ENCODE measurements at regions of chr18 and their contacts with region 1.

Region 1: DNA sequence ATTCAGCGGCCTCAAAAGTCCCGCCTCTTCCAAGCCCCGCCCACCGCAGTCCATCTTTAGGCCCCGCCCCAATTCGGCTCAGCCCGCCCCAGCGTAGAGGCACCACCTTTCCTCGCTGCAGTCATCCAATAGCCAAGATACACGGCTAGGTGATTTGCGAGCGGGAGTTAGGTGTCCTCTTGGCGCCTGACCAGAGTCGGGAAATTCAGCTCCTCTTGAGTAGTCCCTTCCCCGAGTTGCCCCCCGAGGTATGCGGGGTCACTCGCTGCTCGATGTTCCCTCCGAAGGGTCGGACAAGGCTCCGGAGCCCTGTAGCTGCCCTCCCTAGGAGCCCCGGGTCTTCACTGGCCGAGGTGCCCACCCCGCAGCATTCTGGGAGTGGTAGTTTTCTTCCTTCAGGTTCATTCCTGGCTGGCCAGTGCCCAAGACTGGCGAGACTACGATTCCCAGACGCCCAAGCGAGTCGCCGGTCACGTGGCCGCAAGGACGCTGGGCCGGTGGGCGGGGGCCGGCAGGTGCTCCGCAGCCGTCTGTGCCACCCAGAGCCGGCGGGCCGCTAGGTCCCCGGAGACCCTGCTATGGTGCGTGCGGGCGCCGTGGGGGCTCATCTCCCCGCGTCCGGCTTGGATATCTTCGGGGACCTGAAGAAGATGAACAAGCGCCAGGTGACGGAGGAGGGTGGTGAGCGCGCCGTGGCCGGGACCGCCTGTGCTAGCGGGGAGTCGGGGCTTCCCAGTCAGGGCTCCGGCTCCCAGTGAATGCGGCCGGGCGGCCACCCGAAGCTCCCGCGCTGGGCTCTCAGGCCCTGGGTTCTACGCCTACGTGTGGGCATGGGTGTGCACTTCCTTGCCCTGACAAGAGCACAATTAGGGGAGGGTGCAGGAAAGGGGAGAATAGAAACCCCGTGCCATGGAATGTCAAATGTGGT is at the start of gene SEC11C:
- DNase-seq: peak; percentile 93
- ATAC-seq: peak; percentile 85
- H3K4me3 ChIP-seq: peak within 1 kb of the TSS; percentile 93
- H3K27ac ChIP-seq: peak within 1 kb of the TSS; percentile 98
- H3K4me1 ChIP-seq: peaks cover 8% of the 10 kb centered on the region; the same call in 1 of the 2 replicates
- H3K27me3 ChIP-seq: 0 out of 4 replicates have a peak, but pooled peaks cover 0 to 4% of the 10 kb centered on the region in 2 experiments
- CTCF ChIP-seq: no peak
- EP300 ChIP-seq: no peak
- POLR2A ChIP-seq: peak; percentile 93
- RAD21 ChIP-seq: no peak
- polyA plus RNA-seq, gene SEC11C: 213 to 304 TPM

Region 2: DNA sequence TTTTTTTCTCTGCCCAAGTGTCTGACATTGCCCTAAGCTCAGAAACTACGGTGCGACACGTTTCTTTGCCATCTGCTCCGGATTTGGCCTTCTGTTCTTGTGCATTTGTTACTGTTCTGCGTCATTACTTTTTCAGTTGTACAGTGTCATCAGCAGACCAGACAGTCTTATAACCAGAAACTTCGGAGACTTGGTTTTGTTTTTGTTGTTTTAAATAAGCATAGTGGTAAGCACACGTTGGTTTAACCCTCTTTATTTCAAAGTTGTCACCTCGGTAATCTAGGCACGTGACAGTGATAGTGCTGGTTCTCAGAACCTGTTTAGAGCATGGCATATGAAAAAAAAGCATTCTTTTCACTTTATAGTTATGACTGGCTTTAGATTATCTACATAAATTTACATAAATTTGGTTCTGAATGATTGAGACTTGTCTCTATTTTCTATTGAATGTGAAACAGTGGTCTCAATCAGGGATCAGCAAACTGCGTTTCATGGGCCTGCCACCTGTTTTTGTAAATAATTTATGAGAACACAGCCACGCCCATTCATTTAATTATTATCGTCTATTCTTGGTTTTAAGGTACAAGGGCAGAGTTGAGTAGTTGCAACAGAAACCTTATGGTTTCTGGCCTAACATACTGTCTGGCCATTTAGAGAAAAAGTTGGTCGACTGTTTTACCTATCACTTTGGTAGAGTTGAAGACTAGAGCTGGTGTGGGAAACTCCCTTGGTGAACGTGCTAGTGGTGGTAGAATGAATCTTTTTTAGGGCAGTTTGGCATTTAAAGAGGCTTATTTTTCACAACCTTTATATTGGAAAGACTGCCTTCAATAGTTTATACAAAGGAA is 168.5 kb before region 1 on chr18:
- CTCF ChIA-PET with region 1: no interaction called
- POLR2A ChIA-PET with region 1: no interaction called
- RAD21 ChIA-PET with region 1: interaction called, 8 read pairs
- SMC1A ChIA-PET with region 1: interaction called, 4 read pairs
- in situ Hi-C with region 1: no loop called
- intact Hi-C with region 1: loop called (anchors 5 kb)
- DNase-seq: peak; percentile 76
- ATAC-seq: peak; percentile 88
- H3K4me3 ChIP-seq: no peak overlapping the region; the same call in 1 of the 2 replicates
- H3K27ac ChIP-seq: peak overlapping the region; percentile 67
- H3K4me1 ChIP-seq: peaks cover 44% of the 10 kb centered on the region
- H3K27me3 ChIP-seq: no peaks in the 10 kb centered on the region
- CTCF ChIP-seq: no peak
- EP300 ChIP-seq: no peak; a peak in 2 of 4 replicates
- POLR2A ChIP-seq: no peak
- RAD21 ChIP-seq: no peak

Region 3: GRCh38 chr18:59085797-59086196 is 53.8 kb before region 1 on chr18:
- CTCF ChIA-PET with region 1: interaction called, 22 read pairs
- POLR2A ChIA-PET with region 1: no interaction called
- RAD21 ChIA-PET with region 1: interaction called, 9 read pairs
- SMC1A ChIA-PET with region 1: interaction called, 8 read pairs
- in situ Hi-C with region 1: no loop called
- intact Hi-C with region 1: no loop called
- DNase-seq: no peak
- ATAC-seq: no peak
- H3K4me3 ChIP-seq: no peak overlapping the region
- H3K27ac ChIP-seq: no peak overlapping the region
- H3K4me1 ChIP-seq: peaks cover 4% of the 10 kb centered on the region
- H3K27me3 ChIP-seq: peaks cover 0 to 3% of the 10 kb centered on the region in 2 experiments; a peak in 1 of 4 replicates
- CTCF ChIP-seq: no peak
- EP300 ChIP-seq: no peak
- POLR2A ChIP-seq: no peak
- RAD21 ChIP-seq: no peak

Region 4: GRCh38 chr18:59358712-59359575 is 219.3 kb after region 1 on chr18 and contains the start of gene LMAN1:
- CTCF ChIA-PET with region 1: interaction called, 3 read pairs
- POLR2A ChIA-PET with region 1: interaction called, 4 read pairs
- RAD21 ChIA-PET with region 1: interaction called, 4 read pairs
- SMC1A ChIA-PET with region 1: interaction called, 4 read pairs
- in situ Hi-C with region 1: no loop called
- intact Hi-C with region 1: loop called (anchors 2 kb)
- DNase-seq: peak; percentile 51
- ATAC-seq: peak; percentile 97
- H3K4me3 ChIP-seq: peak within 1 kb of the TSS; percentile 68
- H3K27ac ChIP-seq: peak within 1 kb of the TSS; percentile 77
- H3K4me1 ChIP-seq: no peaks in the 10 kb centered on the region
- H3K27me3 ChIP-seq: no peaks in the 10 kb centered on the region
- CTCF ChIP-seq: no peak
- EP300 ChIP-seq: no peak
- POLR2A ChIP-seq: peak; percentile 90
- RAD21 ChIP-seq: no peak
- polyA plus RNA-seq, gene LMAN1: 15.0 to 20.3 TPM

Measured in GM12878 (cell line).